G401 (cell line): ENCODE measurements at regions of chr4 and their contacts with region 1.

Region 1: DNA sequence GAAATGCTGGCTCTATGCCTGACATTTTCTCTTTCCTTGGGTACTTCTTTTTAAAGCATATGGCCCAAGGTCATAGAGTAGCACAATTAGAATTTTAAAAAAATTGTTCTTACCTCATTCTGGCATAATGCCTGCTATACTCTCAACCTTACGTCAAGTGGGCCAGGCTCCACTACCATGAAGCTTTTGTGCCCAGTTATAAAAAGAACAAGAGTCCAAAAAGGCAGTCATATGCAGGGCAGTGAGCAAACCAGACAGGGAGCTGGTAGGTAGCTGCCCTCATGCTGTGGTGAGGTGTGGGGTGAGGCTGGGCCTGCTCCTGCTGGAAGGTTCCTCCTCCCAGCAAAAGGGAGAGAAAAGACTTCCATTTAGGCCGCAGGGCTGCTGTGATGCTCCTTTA is 64.4 kb upstream of the UCP1 start:
- DNase-seq: no peak

Region 2: DNA sequence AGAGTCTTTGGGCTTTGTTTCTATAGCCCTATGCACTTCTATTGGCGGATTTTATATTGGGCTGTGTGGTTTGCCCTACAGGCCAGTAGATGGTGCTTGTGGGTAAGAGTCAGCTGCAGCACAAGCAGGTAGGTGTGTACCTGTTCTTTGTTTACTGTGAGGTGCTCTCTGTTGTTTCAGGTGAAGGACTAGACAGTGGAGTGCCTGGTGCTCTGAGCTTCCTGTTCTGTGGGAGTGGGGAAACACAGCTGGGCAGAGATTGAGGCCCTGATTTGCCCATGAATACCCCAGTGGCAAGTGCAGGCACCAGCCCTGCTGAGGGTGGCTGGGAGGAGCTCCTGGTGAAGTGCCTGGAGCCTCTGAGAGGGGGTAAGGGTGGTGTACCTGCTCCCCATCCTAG is 38.1 kb before region 1 on chr4:
- in situ Hi-C with region 1: loop called (anchors 5 kb)
- DNase-seq: peak; percentile 68